ENCODE measurements at regions of chr15 and their contacts with region 1.

Region 1: GRCh38 chr15:44066316-44066740 is 128.7 kb downstream of the FRMD5 start:
- DNase-seq: no peak
- H3K4me3 ChIP-seq: no peak overlapping the region
- CTCF ChIP-seq: peak; percentile 63

Region 2: DNA sequence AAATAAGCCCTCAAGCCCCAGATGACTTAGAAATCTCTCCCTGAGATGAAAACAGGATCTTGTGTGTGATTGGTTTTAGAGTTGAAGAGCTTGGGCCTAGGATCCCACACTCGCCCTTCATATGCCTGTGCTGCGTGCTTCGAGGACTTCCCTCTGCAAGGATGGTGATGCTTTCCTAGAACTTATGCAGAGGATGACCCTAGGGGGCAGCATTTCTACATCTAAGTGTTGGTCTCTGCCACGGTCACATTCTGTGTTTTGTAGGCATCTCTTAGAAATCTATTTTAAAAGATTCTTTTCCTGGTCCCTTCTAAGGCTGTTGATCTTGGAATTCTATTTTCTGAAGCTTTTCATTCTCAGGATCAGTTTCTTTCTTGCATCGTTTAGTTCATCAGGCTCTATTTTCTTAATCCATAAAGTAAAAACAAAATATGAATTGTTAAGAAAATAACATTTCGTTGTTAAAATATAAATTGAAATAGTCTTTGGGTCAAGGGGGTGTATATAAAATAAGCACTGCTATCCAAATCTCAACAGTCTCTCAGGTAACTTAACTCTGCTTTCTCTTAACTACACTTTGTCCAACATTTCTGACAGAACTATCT is 193.8 kb before region 1 on chr15:
- CTCF ChIA-PET with region 1: interaction called, 33 read pairs
- POLR2A ChIA-PET with region 1: no interaction called
- DNase-seq: peak; percentile 28
- H3K4me3 ChIP-seq: no peak overlapping the region
- CTCF ChIP-seq: peak; percentile 77

Region 3: DNA sequence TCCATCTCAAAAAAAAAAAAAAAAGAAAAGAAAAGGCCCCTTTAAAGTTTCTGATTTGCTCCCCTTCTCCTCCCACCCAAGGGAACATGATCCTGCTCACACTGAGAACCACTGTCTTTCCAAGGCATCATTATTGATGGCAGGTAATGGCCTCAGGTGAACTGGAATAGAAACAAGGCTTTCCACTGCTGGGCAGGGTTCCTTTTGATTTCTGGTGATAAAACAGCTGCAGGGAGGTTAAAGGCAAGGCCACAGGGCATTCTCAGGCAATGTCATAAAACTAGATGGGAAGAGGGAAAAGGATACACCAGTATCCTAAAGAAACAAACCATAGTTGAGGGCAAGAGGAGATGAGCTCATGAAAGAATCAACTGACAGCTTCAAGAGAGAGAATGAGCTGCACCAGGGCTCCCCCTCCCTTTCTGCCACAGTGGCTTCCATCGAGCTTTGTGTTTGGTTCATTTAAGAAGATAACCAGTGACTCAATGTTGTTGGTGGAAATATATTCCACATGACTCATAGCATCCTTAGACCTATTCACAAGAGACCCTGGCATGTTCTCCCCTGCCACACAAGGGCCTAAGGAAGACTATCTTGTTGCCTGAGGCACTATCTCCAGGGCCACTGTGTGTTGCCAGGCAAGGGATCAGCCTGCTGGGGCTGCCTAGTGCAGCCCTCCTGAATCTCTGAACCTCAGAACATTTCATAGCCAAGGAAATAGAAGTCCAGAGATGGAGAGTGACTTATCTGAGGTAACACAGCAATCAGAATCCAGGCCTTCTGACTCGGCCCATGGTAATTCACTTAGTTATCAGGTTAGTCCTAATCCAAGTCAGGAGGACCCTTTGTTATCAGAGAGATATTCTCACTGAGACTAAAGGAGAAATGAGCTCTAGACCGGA is 153.1 kb before region 1 on chr15:
- CTCF ChIA-PET with region 1: interaction called, 25 read pairs
- POLR2A ChIA-PET with region 1: no interaction called
- DNase-seq: peak; percentile 92
- H3K4me3 ChIP-seq: no peak overlapping the region
- CTCF ChIP-seq: no peak

Region 4: DNA sequence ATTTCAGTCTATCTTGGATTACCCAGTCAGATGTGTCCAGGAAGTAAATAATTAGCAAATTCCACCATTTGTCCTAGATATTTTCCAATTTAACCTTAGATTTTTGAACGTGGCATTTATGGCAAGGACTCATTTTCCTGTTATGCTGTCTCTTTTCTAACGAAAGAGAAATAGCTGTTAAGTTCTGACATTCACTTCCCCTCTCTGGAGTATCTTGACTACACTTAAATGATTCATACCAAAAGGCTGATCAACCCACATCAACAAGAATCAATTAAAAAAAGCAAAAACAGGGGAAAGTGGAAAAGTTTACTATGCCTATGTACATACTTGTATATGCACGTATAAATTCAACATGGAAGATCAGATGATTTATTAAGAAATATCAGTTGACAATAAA is 21.1 kb before region 1 on chr15:
- CTCF ChIA-PET with region 1: interaction called, 25 read pairs
- POLR2A ChIA-PET with region 1: no interaction called
- DNase-seq: no peak
- H3K4me3 ChIP-seq: no peak overlapping the region
- CTCF ChIP-seq: no peak

Region 5: GRCh38 chr15:44102675-44103254 is 36.4 kb after region 1 on chr15:
- CTCF ChIA-PET with region 1: interaction called, 10 read pairs
- POLR2A ChIA-PET with region 1: no interaction called
- DNase-seq: peak; percentile 83
- H3K4me3 ChIP-seq: no peak overlapping the region
- CTCF ChIP-seq: no peak

Region 6: DNA sequence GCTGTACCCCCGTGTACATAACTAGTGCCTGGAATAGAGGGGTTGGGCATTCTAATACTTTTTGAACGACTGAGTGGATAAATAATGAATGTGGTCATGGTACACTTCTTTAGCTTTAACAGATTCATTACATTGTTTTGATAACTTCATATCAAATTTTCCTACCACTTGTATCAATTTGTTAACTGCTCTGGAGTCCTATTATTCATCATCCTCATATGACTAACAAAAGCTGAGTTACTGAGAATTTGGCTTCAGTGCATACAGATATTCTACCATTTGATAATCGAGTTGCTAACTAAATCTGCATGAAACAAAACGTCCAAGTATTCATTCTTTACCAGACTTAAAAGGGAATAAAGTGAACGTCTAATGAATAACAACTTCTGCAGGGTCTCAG is 97.0 kb after region 1 on chr15:
- CTCF ChIA-PET with region 1: no interaction called
- POLR2A ChIA-PET with region 1: no interaction called
- DNase-seq: no peak
- H3K4me3 ChIP-seq: no peak overlapping the region
- CTCF ChIP-seq: no peak

Measured in AG04449 (cell line).